ENCODE measurements at regions of chr9 and their contacts with region 1.

Region 1: DNA sequence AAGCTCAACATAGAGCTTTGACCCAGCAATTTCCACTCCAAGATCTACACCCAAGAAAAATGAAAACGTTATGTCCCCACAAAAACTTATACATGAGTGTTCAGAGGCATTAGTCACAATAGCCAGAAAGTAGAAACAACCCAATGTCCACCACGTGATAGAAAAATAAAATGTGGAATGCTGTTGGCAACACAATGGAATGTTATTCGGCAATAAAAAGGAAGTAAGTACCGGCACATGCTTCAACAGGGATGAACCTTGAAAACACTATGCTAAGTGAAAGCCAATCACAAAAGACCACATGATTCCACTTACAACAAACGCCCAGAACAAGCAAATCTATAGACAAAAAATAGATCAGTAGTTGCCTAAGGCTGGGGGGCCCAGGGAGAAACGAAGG is 6.0 kb downstream of the UBQLN1 start:
- DNase-seq: peak; percentile 34
- H3K4me3 ChIP-seq: peak overlapping the region; percentile 89
- H3K27ac ChIP-seq: peak overlapping the region; percentile 82
- H3K4me1 ChIP-seq: peaks cover 87% of the 10 kb centered on the region
- CTCF ChIP-seq: no peak

Region 2: GRCh38 chr9:83633255-83633654 is 68.5 kb before region 1 on chr9:
- CTCF ChIA-PET with region 1: interaction called, 3 read pairs
- POLR2A ChIA-PET with region 1: interaction called, 12 read pairs
- intact Hi-C with region 1: no loop called
- DNase-seq: no peak
- H3K4me3 ChIP-seq: no peak overlapping the region
- H3K27ac ChIP-seq: no peak overlapping the region
- H3K4me1 ChIP-seq: no peaks in the 10 kb centered on the region
- CTCF ChIP-seq: no peak

Region 3: GRCh38 chr9:83656952-83657351 is 44.8 kb before region 1 on chr9:
- CTCF ChIA-PET with region 1: no interaction called
- POLR2A ChIA-PET with region 1: no interaction called
- intact Hi-C with region 1: no loop called
- DNase-seq: no peak
- H3K4me3 ChIP-seq: no peak overlapping the region
- H3K27ac ChIP-seq: no peak overlapping the region
- H3K4me1 ChIP-seq: no peaks in the 10 kb centered on the region
- CTCF ChIP-seq: no peak

Region 4: DNA sequence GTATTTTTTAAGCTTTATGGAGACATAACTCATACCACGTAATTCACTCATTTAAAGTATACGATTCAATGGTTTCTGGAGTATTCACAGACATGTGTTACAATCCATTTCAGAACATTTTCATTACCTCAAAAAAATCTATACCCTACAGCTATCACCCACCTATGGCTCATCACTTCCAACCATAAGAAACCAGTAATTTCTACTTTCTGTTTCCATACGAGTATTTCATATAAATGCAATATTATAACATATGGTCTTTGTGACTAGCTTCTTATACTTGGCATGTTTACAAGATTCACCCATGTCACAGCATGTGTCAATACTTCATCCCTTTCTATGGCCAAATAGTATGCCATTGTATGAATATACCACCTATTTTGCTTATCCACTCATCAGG is 12.8 kb before region 1 on chr9:
- CTCF ChIA-PET with region 1: interaction called, 3 read pairs
- POLR2A ChIA-PET with region 1: interaction called, 41 read pairs
- intact Hi-C with region 1: loop called (anchors 2 kb)
- DNase-seq: no peak
- H3K4me3 ChIP-seq: no peak overlapping the region
- H3K27ac ChIP-seq: no peak overlapping the region
- H3K4me1 ChIP-seq: peaks cover 63% of the 10 kb centered on the region
- CTCF ChIP-seq: no peak

Region 5: GRCh38 chr9:83754383-83754977 is 52.7 kb after region 1 on chr9:
- CTCF ChIA-PET with region 1: no interaction called
- POLR2A ChIA-PET with region 1: no interaction called
- intact Hi-C with region 1: no loop called
- DNase-seq: peak; percentile 26
- H3K4me3 ChIP-seq: no peak overlapping the region
- H3K27ac ChIP-seq: no peak overlapping the region
- H3K4me1 ChIP-seq: peaks cover 6% of the 10 kb centered on the region
- CTCF ChIP-seq: no peak